Activated CD4-positive, alpha-beta T cell treated with anti-CD3 and anti-CD28 coated beads, Interleukin-2, amount 10 ng/mL, durations not matched to agents 24 days and 14 days (primary cell): ENCODE measurements at regions of chr11 and their contacts with region 1.

Region 1: DNA sequence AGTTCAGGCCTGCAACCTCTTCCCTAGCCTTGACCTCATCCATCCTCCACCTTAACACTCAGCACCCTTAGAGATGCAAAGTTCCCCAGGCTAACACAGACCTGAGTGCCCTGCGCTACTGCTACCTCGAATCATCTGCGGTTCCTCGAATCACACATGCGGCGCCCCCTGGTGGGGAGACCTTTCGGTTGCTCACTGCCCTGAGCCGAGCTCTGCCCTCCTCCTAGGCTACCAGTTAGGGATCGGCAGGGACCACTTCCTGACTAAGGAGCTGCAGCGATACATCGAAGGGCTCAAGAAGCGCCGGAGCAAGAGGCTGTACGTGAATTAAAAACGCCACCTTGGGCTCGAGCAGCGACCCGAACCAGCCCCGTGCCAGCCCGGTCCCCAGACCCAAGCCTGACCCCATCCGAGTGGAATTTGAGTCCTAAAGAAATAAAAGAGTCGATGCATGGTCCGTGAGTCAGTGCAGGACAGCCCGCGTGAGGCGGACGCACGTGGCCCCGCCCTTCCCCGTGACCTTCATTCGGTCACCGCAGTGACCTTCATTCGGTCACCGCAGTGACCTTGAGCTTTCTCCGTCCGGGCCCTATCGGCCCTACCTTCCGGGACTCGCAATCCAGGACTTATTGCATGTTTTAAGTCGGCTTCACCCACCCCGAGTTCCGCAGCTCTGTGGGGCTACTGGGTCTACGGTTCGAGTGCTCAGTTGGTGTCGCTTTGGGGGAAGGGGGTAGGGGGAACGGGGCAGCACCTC is 830 bp upstream of the ESRRA start:
- DNase-seq: peak; percentile 98
- H3K4me3 Mint-ChIP-seq: peak overlapping the region; percentile 89
- H3K27ac Mint-ChIP-seq: peak overlapping the region; percentile 99
- H3K4me1 Mint-ChIP-seq: peaks cover 26% of the 10 kb centered on the region
- H3K27me3 Mint-ChIP-seq: peaks cover 17% of the 10 kb centered on the region

Region 2: DNA sequence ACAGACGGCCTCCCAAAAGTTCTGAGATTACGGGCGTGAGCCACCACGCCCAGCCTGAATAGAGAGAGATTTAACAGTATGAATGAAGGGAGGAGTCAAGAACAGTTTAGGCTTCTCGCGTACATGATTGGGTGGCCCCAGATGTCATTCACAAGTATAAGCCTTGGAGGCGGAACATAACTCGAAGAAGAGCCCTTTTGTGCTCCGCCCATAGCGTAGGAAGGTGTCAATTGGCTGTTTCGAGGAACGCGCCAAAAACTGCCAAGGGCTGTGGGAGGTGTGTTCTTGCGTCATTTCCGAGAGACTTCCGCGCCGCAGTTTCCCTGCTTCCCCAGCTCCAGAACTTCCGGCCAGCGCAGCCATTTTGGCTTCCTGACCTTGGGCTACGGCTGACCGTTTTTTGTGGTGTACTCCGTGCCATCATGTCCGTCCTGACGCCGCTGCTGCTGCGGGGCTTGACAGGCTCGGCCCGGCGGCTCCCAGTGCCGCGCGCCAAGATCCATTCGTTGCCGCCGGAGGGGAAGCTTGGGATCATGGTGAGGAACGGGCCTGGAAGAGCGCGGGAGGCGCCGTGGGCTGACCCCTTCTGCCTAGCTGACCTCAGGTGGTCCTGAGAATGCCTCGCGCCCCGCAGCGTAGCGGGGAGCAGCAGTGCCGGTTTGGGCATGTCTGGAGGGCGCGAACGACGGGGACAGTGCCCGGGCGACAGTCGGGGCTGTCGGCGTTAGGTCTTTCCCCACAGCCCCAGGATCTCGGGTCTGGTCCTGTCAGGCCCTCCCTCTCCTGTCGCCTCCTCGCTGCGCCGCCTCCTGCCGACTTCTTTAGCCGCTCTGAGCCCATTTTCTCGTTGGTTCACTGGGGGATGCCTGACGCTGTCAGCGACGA is 330.0 kb before region 1 on chr11 and contains the start of gene COX8A:
- intact Hi-C with region 1: loop called (anchors 10 kb)
- DNase-seq: peak; percentile 99
- H3K4me3 Mint-ChIP-seq: peak within 1 kb of the TSS; percentile 100
- H3K27ac Mint-ChIP-seq: peak within 1 kb of the TSS; percentile 99
- H3K4me1 Mint-ChIP-seq: peaks cover 18% of the 10 kb centered on the region
- H3K27me3 Mint-ChIP-seq: peaks cover under 1% of the 10 kb centered on the region
- total RNA-seq, gene COX8A: 302 TPM in 2 replicates

Region 3: GRCh38 chr11:64185816-64186498 is 118.5 kb before region 1 on chr11 and contains the start of gene STIP1:
- intact Hi-C with region 1: loop called (anchors 5 kb)
- DNase-seq: peak; percentile 99
- H3K4me3 Mint-ChIP-seq: no peak within 1 kb of the TSS
- H3K27ac Mint-ChIP-seq: peak within 1 kb of the TSS; percentile 98
- H3K4me1 Mint-ChIP-seq: peaks cover 31% of the 10 kb centered on the region
- H3K27me3 Mint-ChIP-seq: peaks cover 4% of the 10 kb centered on the region
- total RNA-seq, gene STIP1: 521 and 535 TPM in 2 replicates

Region 4: DNA sequence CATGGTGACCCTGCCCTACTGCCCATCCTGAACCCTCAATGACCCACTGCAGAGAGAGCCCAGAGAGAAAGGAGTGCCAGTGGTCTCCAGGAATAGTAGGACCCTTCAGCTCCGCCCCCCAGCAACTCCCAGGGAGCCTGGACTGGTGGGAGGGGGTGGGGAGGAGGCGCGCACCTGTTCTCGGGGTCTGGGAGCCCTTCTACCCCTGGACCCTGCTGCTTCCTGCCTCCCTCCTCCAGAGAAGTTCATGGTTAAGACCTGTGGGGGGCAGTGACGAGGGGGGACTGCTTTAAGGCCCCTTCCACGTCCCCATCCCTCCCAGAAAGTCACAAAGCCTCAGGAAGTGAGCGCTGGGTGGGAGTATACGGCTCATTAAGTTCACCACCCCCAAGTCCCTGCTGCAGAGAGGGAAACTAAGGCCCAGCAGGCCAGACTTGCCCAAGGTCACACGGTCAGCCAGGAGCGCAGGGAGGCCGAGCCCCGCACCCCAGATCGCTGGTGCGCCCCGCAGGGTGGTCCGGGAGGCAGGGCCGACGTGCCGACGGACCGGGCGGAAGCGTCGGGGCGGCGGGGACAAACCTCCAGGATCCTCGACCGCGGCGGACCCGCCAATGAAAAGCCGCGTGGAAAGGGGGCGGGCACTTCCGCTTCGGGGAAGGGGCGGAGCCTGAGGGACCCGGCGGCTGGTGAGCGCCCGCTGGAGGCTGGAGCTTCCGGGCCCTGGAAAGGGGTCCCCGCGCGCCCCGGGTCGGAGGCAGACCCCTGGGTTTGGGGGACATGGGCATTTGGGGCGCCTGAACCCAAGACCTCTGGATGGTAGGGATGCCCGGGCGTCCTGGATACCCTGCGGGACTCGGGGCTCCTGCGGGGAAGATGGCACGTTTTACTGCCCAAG is 78.6 kb before region 1 on chr11 and contains the starts of genes NUDT22 and TRPT1:
- intact Hi-C with region 1: loop called (anchors 2 kb)
- DNase-seq: peak; percentile 99
- H3K4me3 Mint-ChIP-seq: peak within 1 kb of the TSS; percentile 91
- H3K27ac Mint-ChIP-seq: peak within 1 kb of the TSS; percentile 86
- H3K4me1 Mint-ChIP-seq: peaks cover 27% of the 10 kb centered on the region
- H3K27me3 Mint-ChIP-seq: no peaks in the 10 kb centered on the region
- total RNA-seq, gene NUDT22: 66.1 and 72.6 TPM in 2 replicates
- total RNA-seq, gene TRPT1: 29.8 and 31.7 TPM in 2 replicates

Region 5: GRCh38 chr11:64269380-64270234 is 34.9 kb before region 1 on chr11:
- intact Hi-C with region 1: loop called (anchors 1 kb)
- DNase-seq: peak; percentile 99
- H3K4me3 Mint-ChIP-seq: peak overlapping the region; percentile 96
- H3K27ac Mint-ChIP-seq: peak overlapping the region; percentile 99
- H3K4me1 Mint-ChIP-seq: peaks cover 26% of the 10 kb centered on the region
- H3K27me3 Mint-ChIP-seq: no peaks in the 10 kb centered on the region

Region 6: GRCh38 chr11:64291752-64292459 is 12.6 kb before region 1 on chr11:
- intact Hi-C with region 1: loop called (anchors 1 kb)
- DNase-seq: peak; percentile 72
- H3K4me3 Mint-ChIP-seq: no peak overlapping the region
- H3K27ac Mint-ChIP-seq: no peak overlapping the region
- H3K4me1 Mint-ChIP-seq: peaks cover 7% of the 10 kb centered on the region
- H3K27me3 Mint-ChIP-seq: peaks cover 52% of the 10 kb centered on the region

Region 7: DNA sequence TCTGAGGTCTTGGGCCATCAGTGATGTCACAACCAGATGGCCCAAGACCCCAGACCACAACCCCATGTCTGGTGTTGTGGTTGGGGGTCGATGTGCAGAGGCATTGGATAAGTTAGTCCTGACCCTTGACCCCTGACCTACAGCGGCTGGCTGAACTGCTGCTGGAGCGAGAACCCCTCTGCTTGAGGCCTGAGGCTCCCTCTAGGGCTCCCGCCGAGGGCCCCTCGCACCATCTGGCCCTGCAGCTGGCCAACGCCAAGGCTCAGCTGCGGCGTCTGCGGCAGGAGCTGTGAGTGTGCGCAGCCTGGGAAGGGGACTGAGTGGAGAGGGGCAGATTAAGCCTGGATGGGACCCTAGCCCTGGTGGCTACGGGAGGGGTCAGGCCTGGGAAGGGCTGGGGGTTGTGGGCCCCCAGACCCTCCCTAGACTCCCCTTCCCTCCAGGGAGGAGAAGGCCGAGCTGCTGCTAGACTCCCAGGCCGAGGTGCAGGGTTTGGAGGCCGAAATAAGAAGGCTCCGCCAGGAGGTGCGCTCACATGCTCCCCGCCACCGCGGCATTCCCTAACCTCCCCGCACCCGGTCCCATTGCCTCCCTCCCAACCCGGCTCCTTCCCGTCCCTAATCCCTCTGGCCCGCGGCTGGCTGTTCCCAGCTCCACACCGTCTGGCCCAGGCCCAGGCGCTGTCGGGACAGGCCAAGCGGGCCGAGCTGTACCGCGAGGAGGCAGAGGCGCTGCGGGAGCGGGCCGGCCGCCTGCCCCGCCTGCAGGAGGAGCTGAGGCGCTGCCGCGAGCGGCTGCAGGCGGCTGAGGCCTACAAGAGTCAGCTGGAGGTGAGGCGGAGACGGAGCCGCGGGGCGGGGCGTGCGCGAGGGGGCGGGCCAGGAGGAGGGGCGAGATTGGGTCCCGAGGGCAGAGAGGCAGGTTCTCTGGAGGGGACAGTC is 37.6 kb after region 1 on chr11:
- intact Hi-C with region 1: loop called (anchors 2 kb)
- DNase-seq: peak; percentile 98
- H3K4me3 Mint-ChIP-seq: peak overlapping the region; percentile 99
- H3K27ac Mint-ChIP-seq: no peak overlapping the region
- H3K4me1 Mint-ChIP-seq: peaks cover 31% of the 10 kb centered on the region
- H3K27me3 Mint-ChIP-seq: no peaks in the 10 kb centered on the region